Activated naive CD4-positive, alpha-beta T cell treated with anti-CD3 and anti-CD28 coated beads for 36 hours (primary cell): ENCODE measurements at regions of chr11 and their contacts with region 1.

Region 1: GRCh38 chr11:83007909-83008580 is 63.7 kb downstream of the RAB30 start:
- DNase-seq: no peak
- H3K4me3 Mint-ChIP-seq: no peak overlapping the region
- H3K27ac Mint-ChIP-seq: no peak overlapping the region
- H3K4me1 Mint-ChIP-seq: peaks cover 50% of the 10 kb centered on the region
- H3K27me3 Mint-ChIP-seq: no peaks in the 10 kb centered on the region

Region 2: DNA sequence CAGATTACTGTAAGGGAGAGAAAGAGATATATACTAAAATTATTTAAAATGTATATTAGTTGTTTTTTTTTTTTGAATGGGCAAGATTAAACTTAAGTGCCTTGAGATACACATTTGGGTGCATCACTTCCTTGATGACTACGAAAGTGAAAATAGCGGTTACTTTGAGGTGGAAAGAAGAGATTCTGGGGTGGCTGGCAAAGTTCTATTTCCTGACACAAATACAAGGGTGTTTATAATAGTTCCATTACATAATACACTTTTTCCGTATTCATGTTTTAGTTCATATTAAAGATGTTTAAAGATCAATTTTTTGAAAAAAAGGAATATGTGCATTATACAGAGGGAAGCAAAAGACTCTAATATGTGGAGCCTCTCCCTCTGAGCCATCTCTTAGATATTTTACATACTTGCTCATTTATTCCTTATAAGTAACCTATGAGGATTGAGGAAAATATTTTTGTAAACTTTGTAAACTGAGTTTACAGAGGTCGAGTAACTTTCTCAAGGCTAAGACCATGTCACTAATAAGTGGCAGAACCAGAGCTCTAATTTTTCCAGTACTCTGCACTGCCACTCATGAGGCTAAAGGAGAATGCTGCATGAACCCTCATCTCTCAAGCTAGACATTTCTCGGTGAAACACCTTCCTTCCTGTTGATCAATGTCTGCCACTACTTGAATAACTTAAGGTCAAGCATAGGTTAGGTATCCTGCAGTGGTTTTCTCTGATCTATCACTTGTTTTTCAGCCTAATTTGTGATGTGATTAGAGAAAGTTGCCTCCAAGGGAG is 47.9 kb before region 1 on chr11:
- CTCF ChIA-PET with region 1: no interaction called
- intact Hi-C with region 1: loop called (anchors 1 kb)
- DNase-seq: peak; percentile 55
- H3K4me3 Mint-ChIP-seq: peak overlapping the region; percentile 21
- H3K27ac Mint-ChIP-seq: peak overlapping the region; percentile 68
- H3K4me1 Mint-ChIP-seq: peaks cover 82% of the 10 kb centered on the region
- H3K27me3 Mint-ChIP-seq: no peaks in the 10 kb centered on the region

Region 3: DNA sequence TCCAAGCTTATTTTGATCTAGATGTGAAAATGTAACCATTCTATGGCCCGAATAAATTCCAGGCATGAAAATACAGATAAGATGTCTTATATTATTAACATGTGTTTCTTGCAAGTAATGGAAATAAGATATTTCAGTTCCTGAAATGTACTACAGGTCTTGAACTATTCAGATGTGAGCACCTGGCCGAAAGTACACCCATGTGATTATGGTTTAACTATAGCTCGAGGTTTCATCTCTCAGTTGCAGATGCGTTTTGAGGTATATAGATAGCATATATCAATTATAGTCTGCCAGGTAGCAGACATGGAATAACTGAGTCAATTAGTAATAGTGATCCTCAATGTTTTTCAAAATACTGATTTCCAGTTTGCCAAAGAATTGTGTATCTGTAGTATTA is 38.2 kb before region 1 on chr11:
- CTCF ChIA-PET with region 1: no interaction called
- intact Hi-C with region 1: loop called (anchors 2 kb)
- DNase-seq: peak; percentile 41
- H3K4me3 Mint-ChIP-seq: peak overlapping the region; percentile 47
- H3K27ac Mint-ChIP-seq: peak overlapping the region; percentile 59
- H3K4me1 Mint-ChIP-seq: peaks cover 50% of the 10 kb centered on the region
- H3K27me3 Mint-ChIP-seq: no peaks in the 10 kb centered on the region

Region 4: GRCh38 chr11:82978422-82979099 is 29.5 kb before region 1 on chr11:
- CTCF ChIA-PET with region 1: no interaction called
- intact Hi-C with region 1: loop called (anchors 1 kb)
- DNase-seq: no peak
- H3K4me3 Mint-ChIP-seq: peak overlapping the region; percentile 0
- H3K27ac Mint-ChIP-seq: peak overlapping the region; percentile 33
- H3K4me1 Mint-ChIP-seq: peaks cover 51% of the 10 kb centered on the region
- H3K27me3 Mint-ChIP-seq: no peaks in the 10 kb centered on the region

Region 5: DNA sequence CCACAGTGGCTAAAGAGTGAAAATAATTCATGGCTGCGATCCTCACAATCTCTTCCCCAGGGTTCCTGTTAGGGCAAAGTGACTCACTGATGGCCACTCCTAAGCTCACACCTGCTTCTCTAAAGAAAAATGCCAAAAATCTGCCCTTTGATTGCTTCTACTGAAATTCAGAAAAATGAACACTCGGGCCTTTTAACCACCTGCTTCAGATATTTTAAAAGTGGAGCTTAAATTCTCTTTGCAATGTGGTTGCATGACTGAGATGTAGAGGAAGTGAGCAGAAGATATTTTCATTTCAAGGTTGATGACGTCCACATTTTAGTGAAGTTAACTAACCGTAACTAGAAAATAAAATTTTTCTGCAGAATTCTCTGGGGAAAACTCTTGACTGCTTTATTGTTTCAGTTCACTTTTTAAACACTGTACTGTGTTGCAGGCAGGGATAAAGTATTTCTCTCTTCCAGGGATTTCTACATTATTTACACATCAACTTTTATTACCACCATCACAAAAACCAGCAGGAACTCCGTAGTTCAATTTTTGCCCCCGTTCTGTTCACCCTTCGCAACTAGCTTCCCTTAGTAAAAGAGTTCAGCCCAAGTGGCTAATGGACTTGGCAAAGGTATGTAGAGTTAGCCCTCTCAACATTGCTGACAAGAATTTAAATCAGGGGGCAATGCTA is 55.2 kb after region 1 on chr11:
- CTCF ChIA-PET with region 1: interaction called, 3 read pairs
- intact Hi-C with region 1: loop called (anchors 2 kb)
- DNase-seq: no peak
- H3K4me3 Mint-ChIP-seq: peak overlapping the region; percentile 78
- H3K27ac Mint-ChIP-seq: peak overlapping the region; percentile 93
- H3K4me1 Mint-ChIP-seq: peaks cover 64% of the 10 kb centered on the region
- H3K27me3 Mint-ChIP-seq: no peaks in the 10 kb centered on the region